K562 (cell line): ENCODE measurements at regions of chr3 and their contacts with region 1.

Region 1: GRCh38 chr3:88219138-88219792 is 69.5 kb downstream of the C3orf38 start:
- DNase-seq: peak in 2 of 4 experiments; percentile 10 to 45
- ATAC-seq: peak; percentile 86
- H3K4me3 ChIP-seq: no peak overlapping the region
- H3K27ac ChIP-seq: no peak overlapping the region
- H3K4me1 ChIP-seq: no peaks in the 10 kb centered on the region
- H3K27me3 ChIP-seq: no peaks in the 10 kb centered on the region
- CTCF ChIP-seq: peak; percentile 24 to 55 (median 47); a peak in 4 of 6 replicates
- EP300 ChIP-seq: no peak
- POLR2A ChIP-seq: no peak
- RAD21 ChIP-seq: peak; percentile 20 to 60; a peak in 3 of 4 replicates

Region 2: GRCh38 chr3:89690646-89691045 is 1471.4 kb after region 1 on chr3:
- CTCF ChIA-PET with region 1: no interaction called
- POLR2A ChIA-PET with region 1: no interaction called
- in situ Hi-C with region 1: no loop called
- intact Hi-C with region 1: loop called (anchors 10 kb)
- DNase-seq: no peak
- ATAC-seq: no peak
- H3K4me3 ChIP-seq: no peak overlapping the region
- H3K27ac ChIP-seq: no peak overlapping the region
- H3K4me1 ChIP-seq: no peaks in the 10 kb centered on the region
- H3K27me3 ChIP-seq: no peaks in the 10 kb centered on the region
- CTCF ChIP-seq: no peak
- EP300 ChIP-seq: no peak
- POLR2A ChIP-seq: no peak
- RAD21 ChIP-seq: no peak